Motor neuron (in vitro differentiated cells): ENCODE measurements at regions of chr1 and their contacts with region 1.

Region 1: GRCh38 chr1:34742667-34743270 is 12.1 kb upstream of the GJB5 start:
- ATAC-seq: peak; percentile 78 to 100 (median 93)
- H3K4me3 ChIP-seq: no peak overlapping the region
- H3K27ac ChIP-seq: no peak overlapping the region
- H3K4me1 ChIP-seq: peaks cover 0 to 13% of the 10 kb centered on the region in 2 donors

Region 2: DNA sequence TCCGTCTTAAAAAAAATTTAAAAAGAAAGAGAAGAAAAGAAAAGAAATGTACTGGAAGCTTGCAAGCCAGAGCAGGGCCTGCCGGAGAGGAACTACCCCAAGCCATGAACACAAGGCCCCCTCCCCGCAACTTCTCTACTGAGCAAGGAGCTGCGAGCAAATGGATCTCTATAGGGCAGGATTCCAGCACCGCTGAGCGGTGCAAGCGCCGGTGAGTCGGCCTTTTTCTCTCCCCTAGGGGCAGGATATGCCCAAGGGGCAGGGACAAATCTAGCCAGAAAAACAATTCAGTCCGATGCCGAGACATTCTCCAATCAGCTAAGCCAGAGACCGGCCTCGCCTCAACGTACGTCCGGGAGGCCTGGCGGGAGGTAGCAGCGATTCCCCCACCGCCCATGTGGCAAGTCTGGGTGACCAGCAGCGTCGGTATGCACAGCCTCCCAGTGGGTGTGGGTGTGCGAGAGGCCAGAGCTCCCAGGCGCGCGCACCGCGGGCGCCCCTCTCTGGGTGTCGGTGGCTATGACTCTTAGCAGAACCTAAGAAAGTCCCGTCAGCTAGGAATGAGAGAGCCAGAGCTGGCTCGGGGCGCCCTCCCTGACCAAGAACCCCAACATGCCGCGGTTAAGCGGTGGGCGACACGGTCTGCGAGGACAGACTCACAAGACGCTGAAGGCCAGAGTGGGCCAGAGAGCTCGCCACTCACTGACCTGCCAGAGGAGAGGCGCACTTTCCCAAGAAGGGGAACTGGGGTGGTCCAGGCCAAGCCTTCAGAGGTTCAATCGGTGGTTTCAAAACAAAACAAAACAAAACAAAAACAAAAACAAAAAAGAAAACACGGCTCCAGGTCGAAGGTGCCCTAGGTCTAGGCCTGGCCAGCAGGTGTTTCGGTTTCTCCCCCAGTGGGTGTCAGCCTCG is 579.7 kb before region 1 on chr1:
- in situ Hi-C with region 1: loop called in 1 of 9 experiments (anchors 25 kb)
- ATAC-seq: peak; percentile 84 to 88 (median 88)
- H3K4me3 ChIP-seq: peak overlapping the region in 4 of 5 donors; percentile 50 to 59 (median 50)
- H3K27ac ChIP-seq: no peak overlapping the region
- H3K4me1 ChIP-seq: peaks cover 0 to 16% of the 10 kb centered on the region in 2 donors

Region 3: DNA sequence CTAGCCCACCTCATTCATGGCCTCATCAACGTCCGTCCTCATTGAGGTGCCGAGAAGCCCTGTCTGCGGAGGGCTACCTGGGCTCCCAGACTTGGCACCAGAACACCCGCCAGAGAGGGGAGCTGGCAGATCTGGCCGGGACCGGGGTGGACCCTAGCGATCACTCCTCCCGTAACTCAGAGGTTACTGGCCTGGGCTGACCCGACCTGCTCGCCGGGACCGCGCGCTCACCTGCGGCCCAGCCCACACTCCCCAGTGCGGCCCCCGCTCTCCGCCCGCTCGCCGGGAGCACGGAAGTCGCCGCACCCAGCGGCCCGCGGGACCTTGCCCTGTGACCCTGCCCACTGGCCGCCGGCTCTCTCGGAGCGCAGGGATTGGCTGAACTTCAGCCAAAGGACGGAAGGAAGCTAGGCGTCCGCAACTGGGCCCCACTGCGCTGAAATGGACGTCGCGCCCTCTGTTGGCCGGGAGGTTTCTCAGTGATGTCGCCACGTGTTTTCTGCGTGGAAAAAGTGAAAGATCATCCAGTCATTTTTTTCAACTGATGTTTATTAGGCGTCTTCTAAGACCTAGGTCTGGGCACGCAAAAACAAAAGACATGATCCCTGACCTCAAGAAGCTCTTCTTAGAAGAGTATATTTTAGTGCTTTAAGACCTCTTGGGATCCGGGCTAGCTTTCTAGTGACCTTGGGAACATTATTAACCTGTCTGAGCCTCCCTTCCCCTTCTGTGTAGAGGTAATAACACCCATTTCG is 116.9 kb after region 1 on chr1 and contains the start of gene SMIM12:
- in situ Hi-C with region 1: no loop called
- ATAC-seq: peak; percentile 96 to 100 (median 99)
- H3K4me3 ChIP-seq: peak within 1 kb of the TSS; percentile 60 to 95 (median 82)
- H3K27ac ChIP-seq: peak within 1 kb of the TSS; percentile 3 to 62
- H3K4me1 ChIP-seq: peaks cover 12 to 14% of the 10 kb centered on the region in 2 donors
- total RNA-seq, gene SMIM12: 11.3 to 34.4 (median 24.5) TPM